ENCODE measurements at regions of chr3 and their contacts with region 1.

Region 1: DNA sequence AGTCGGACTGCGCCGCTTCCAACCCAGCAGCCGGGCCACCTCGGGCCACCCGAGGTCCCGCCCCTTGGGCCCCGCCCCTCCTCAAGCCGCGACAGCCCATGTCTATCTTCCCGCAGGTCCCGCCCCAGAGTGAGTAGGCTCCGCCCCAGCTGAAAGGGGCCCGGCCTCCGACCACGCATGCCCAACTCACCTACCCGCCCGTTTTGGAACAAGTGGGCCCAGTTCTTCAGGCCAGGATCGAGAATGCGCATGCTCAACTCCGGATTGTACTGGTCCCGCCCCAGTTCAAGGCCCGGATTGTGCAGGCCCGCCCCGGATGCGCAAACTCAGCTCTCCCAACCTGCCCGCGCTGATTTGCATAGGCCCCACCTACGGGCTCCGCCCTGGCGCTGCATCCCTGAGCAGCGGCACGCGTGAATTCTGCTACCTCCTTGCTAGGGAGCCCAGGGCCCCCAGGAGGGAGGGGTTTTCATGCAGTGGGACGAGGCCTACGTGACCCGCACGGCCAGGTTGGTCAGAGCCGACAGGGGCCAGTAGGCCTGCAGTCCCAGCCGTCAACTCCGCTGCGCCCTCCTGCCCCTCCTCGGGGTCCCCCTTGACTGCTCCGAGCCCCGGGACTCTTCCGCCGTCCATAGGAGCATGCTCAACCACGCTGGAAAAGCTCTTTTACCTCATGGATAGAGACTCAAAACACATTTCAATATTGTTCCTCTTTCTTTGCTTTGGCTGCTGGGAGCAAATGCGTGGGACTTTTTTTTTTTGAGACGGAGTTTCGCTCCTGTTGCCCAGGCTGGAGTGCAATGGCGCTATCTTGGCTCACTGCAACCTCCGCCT is at the start of gene PFKFB4:
- DNase-seq: peak; percentile 97 to 100 (median 99)
- ATAC-seq: peak; percentile 91
- H3K4me3 ChIP-seq: peak within 1 kb of the TSS; percentile 85
- H3K4me3 Mint-ChIP-seq: peak within 1 kb of the TSS; percentile 77 to 93 (median 84)
- H3K27ac ChIP-seq: peak within 1 kb of the TSS; percentile 52
- H3K27ac Mint-ChIP-seq: peak within 1 kb of the TSS; percentile 62 to 90 (median 80)
- H3K4me1 ChIP-seq: peaks cover 5 to 10% of the 10 kb centered on the region in 2 donors
- H3K4me1 Mint-ChIP-seq: peaks cover 11 to 66% (median 24%) of the 10 kb centered on the region in 7 donors
- H3K27me3 ChIP-seq: no peaks in the 10 kb centered on the region
- H3K27me3 Mint-ChIP-seq: peaks cover 0 to 3% (median 0%) of the 10 kb centered on the region in 5 donors
- total RNA-seq, gene PFKFB4: 3.0 to 64.2 (median 3.7) TPM

Region 2: GRCh38 chr3:46976326-46977190 is 1580.5 kb before region 1 on chr3 and contains the start of gene CCDC12:
- CTCF ChIA-PET with region 1: no interaction called
- POLR2A ChIA-PET with region 1: no interaction called
- intact Hi-C with region 1: loop called in 1 of 2 experiments (anchors 2 kb)
- DNase-seq: peak; percentile 79 to 98 (median 96)
- ATAC-seq: peak; percentile 87
- H3K4me3 ChIP-seq: peak within 1 kb of the TSS; percentile 98
- H3K4me3 Mint-ChIP-seq: peak within 1 kb of the TSS; percentile 95 to 100 (median 99)
- H3K27ac ChIP-seq: peak within 1 kb of the TSS; percentile 90
- H3K27ac Mint-ChIP-seq: peak within 1 kb of the TSS; percentile 94 to 99 (median 98)
- H3K4me1 ChIP-seq: peaks cover 46 to 53% of the 10 kb centered on the region in 2 donors
- H3K4me1 Mint-ChIP-seq: peaks cover 44 to 82% (median 63%) of the 10 kb centered on the region in 7 donors
- H3K27me3 ChIP-seq: no peaks in the 10 kb centered on the region
- H3K27me3 Mint-ChIP-seq: no peaks in the 10 kb centered on the region
- total RNA-seq, gene CCDC12: 51.6 to 61.5 (median 56.9) TPM

Region 3: GRCh38 chr3:48232734-48233133 is 324.3 kb before region 1 on chr3:
- CTCF ChIA-PET with region 1: interaction called, 3 read pairs
- POLR2A ChIA-PET with region 1: no interaction called
- intact Hi-C with region 1: loop called in 1 of 2 experiments (anchors 2 kb)
- DNase-seq: peak; percentile 21 to 54 (median 44)
- ATAC-seq: peak; percentile 92
- H3K4me3 ChIP-seq: no peak overlapping the region
- H3K4me3 Mint-ChIP-seq: no peak overlapping the region
- H3K27ac ChIP-seq: no peak overlapping the region
- H3K27ac Mint-ChIP-seq: no peak overlapping the region
- H3K4me1 ChIP-seq: no peaks in the 10 kb centered on the region
- H3K4me1 Mint-ChIP-seq: peaks cover 0 to 6% (median 3%) of the 10 kb centered on the region in 7 donors
- H3K27me3 ChIP-seq: no peaks in the 10 kb centered on the region
- H3K27me3 Mint-ChIP-seq: peaks cover 0 to 6% (median 0%) of the 10 kb centered on the region in 5 donors

Region 4: DNA sequence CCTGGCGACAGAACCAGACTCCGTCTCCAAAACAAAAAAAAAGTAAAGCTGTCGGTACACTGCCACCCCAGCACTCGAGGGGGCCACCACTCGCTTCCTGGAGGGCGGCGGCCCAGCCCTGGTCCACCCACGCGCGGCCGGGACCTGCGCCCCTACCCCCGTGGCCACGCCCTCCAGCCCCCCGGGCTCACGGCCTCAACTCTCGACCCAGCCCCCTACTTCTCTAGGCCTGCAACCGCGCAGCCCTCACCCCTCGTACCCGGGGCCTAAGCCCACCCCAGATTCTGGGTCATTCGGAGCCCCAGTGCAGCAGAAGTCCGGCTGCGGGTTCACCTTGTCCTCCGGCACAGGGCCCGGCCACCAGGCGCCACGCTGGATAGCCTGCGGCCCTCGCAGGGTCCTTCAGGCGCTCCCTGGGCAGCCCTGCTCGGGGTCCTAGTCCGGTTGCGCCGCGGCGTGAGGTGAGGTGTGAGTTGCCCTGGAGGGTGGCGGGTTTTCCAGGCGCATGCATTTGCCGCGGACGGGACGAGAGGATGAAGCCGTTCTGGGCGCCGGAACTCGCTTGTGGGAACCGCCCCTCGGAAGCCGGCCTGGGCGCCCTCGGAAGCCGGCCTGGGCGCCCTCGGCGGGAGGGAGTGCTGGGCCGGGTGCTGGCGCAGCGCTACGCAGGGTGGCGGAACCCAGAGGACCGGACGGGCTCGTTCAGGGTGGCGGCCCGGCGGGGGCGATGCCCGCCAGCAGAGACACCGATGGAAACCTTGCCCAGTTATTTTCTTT is 255.8 kb before region 1 on chr3:
- CTCF ChIA-PET with region 1: no interaction called
- POLR2A ChIA-PET with region 1: interaction called, 3 read pairs
- intact Hi-C with region 1: loop called in 1 of 2 experiments (anchors 2 kb)
- DNase-seq: peak; percentile 69 to 95 (median 81)
- ATAC-seq: peak; percentile 97
- H3K4me3 ChIP-seq: peak within 1 kb of the TSS; percentile 89
- H3K4me3 Mint-ChIP-seq: peak within 1 kb of the TSS; percentile 84 to 97 (median 91)
- H3K27ac ChIP-seq: peak within 1 kb of the TSS; percentile 96
- H3K27ac Mint-ChIP-seq: peak within 1 kb of the TSS; percentile 81 to 98 (median 94)
- H3K4me1 ChIP-seq: peaks cover 10 to 12% of the 10 kb centered on the region in 2 donors
- H3K4me1 Mint-ChIP-seq: peaks cover 26 to 47% (median 40%) of the 10 kb centered on the region in 7 donors
- H3K27me3 ChIP-seq: no peaks in the 10 kb centered on the region
- H3K27me3 Mint-ChIP-seq: peaks cover 0 to 13% (median 0%) of the 10 kb centered on the region in 5 donors

Region 5: GRCh38 chr3:48507351-48508061 is 49.5 kb before region 1 on chr3:
- CTCF ChIA-PET with region 1: interaction called, 25 read pairs
- POLR2A ChIA-PET with region 1: interaction called, 4 read pairs
- intact Hi-C with region 1: loop called in 1 of 2 experiments (anchors 1 kb)
- DNase-seq: peak; percentile 46 to 78 (median 69)
- ATAC-seq: peak; percentile 89
- H3K4me3 ChIP-seq: no peak overlapping the region
- H3K4me3 Mint-ChIP-seq: peak overlapping the region in 9 of 10 donors; percentile 30 to 78 (median 47)
- H3K27ac ChIP-seq: no peak overlapping the region
- H3K27ac Mint-ChIP-seq: peak overlapping the region; percentile 6 to 86 (median 76)
- H3K4me1 ChIP-seq: peaks cover 27 to 41% of the 10 kb centered on the region in 2 donors
- H3K4me1 Mint-ChIP-seq: peaks cover 40 to 61% (median 57%) of the 10 kb centered on the region in 7 donors
- H3K27me3 ChIP-seq: no peaks in the 10 kb centered on the region
- H3K27me3 Mint-ChIP-seq: no peaks in the 10 kb centered on the region

Region 6: DNA sequence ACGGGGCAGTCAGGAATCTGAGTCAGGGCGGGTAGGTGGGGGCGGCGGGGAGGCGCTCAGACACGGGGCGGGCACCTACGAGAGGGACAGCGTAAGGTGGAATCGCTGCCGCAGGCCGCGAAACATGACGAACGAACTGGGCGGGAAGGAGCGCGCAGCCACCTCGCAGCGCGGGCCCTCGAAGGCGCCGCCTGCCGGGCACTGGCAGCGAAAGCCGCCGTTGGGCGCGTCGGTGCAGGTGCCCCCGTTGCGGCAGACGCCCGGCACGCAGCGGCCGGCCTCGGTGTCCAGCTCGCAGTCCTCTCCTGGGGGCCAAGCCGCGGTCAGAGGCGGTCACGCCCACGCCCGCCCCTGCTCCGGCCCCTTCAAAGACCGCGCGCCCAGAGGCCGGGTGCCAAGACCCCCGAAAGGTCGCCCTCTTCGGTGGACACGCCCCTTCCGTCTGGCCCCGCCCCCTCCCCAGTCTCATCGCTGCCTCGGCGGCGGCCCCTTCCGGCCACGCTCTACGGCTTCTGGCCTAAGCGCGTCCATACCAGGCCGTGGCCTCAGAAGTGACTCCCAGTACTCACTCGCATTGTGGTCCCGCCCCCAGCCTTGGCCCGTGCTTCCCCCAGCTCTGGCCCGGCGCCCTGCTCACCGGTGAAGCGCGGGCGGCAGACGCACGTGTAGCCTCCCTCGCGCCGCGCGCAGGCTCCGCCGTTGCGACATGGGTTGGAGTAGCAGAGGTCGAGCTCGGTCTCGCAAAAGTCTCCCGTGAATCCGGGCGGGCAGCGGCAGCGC is 99.2 kb after region 1 on chr3:
- CTCF ChIA-PET with region 1: no interaction called
- POLR2A ChIA-PET with region 1: no interaction called
- intact Hi-C with region 1: loop called (anchors 1 to 2 kb)
- DNase-seq: peak; percentile 75 to 87 (median 86)
- ATAC-seq: peak; percentile 90
- H3K4me3 ChIP-seq: peak overlapping the region; percentile 70
- H3K4me3 Mint-ChIP-seq: peak overlapping the region; percentile 67 to 86 (median 80)
- H3K27ac ChIP-seq: peak overlapping the region; percentile 65
- H3K27ac Mint-ChIP-seq: peak overlapping the region; percentile 42 to 88 (median 79)
- H3K4me1 ChIP-seq: peaks cover 12 to 14% of the 10 kb centered on the region in 2 donors
- H3K4me1 Mint-ChIP-seq: peaks cover 6 to 23% (median 9%) of the 10 kb centered on the region in 7 donors
- H3K27me3 ChIP-seq: no peaks in the 10 kb centered on the region
- H3K27me3 Mint-ChIP-seq: peaks cover 0 to 15% (median 5%) of the 10 kb centered on the region in 5 donors

Region 7: GRCh38 chr3:49007068-49007770 is 450.2 kb after region 1 on chr3 and contains the start of gene WDR6:
- CTCF ChIA-PET with region 1: no interaction called
- POLR2A ChIA-PET with region 1: no interaction called
- intact Hi-C with region 1: loop called (anchors 5 kb)
- DNase-seq: peak; percentile 86 to 98 (median 96)
- ATAC-seq: peak; percentile 95
- H3K4me3 ChIP-seq: peak within 1 kb of the TSS; percentile 96
- H3K4me3 Mint-ChIP-seq: peak within 1 kb of the TSS; percentile 94 to 100 (median 98)
- H3K27ac ChIP-seq: peak within 1 kb of the TSS; percentile 90
- H3K27ac Mint-ChIP-seq: peak within 1 kb of the TSS; percentile 95 to 100 (median 98)
- H3K4me1 ChIP-seq: peaks cover 8 to 16% of the 10 kb centered on the region in 2 donors
- H3K4me1 Mint-ChIP-seq: peaks cover 14 to 34% (median 28%) of the 10 kb centered on the region in 7 donors
- H3K27me3 ChIP-seq: no peaks in the 10 kb centered on the region
- H3K27me3 Mint-ChIP-seq: no peaks in the 10 kb centered on the region
- total RNA-seq, gene WDR6: 170 to 335 (median 204) TPM

Measured in naive thymus-derived CD4-positive, alpha-beta T cell (primary cell).